ENCODE measurements at regions of chr18 and their contacts with region 1.

Region 1: GRCh38 chr18:11784674-11785457 is 66.3 kb upstream of the CHMP1B start:
- DNase-seq: no peak

Region 2: GRCh38 chr18:12254136-12254829 is 469.4 kb after region 1 on chr18 and contains the start of gene CIDEA:
- intact Hi-C with region 1: loop called in 1 of 2 experiments (anchors 5 kb)
- DNase-seq: no peak
- total RNA-seq, gene CIDEA: 0.24 TPM in 1 of 2 donors, not detected in the other

Measured in posterior vena cava (tissue), 2 donors.